CD8-positive, alpha-beta T cell (primary cell): ENCODE measurements at regions of chr3 and their contacts with region 1.

Region 1: GRCh38 chr3:186617038-186617946 is 4.4 kb downstream of the AHSG start:
- DNase-seq: peak; percentile 59 to 95 (median 87)
- ATAC-seq: peak; percentile 99
- H3K4me3 ChIP-seq: peak overlapping the region in 1 of 2 experiments; percentile 15
- H3K4me3 Mint-ChIP-seq: peak overlapping the region; percentile 67
- H3K27ac ChIP-seq: no peak overlapping the region
- H3K27ac Mint-ChIP-seq: no peak overlapping the region
- H3K4me1 ChIP-seq: peaks cover 17% of the 10 kb centered on the region
- H3K4me1 Mint-ChIP-seq: peaks cover 22% of the 10 kb centered on the region
- H3K27me3 ChIP-seq: peaks cover 0 to 10% of the 10 kb centered on the region in 2 experiments
- H3K27me3 Mint-ChIP-seq: peaks cover 34% of the 10 kb centered on the region
- CTCF ChIP-seq: peak; percentile 79

Region 2: DNA sequence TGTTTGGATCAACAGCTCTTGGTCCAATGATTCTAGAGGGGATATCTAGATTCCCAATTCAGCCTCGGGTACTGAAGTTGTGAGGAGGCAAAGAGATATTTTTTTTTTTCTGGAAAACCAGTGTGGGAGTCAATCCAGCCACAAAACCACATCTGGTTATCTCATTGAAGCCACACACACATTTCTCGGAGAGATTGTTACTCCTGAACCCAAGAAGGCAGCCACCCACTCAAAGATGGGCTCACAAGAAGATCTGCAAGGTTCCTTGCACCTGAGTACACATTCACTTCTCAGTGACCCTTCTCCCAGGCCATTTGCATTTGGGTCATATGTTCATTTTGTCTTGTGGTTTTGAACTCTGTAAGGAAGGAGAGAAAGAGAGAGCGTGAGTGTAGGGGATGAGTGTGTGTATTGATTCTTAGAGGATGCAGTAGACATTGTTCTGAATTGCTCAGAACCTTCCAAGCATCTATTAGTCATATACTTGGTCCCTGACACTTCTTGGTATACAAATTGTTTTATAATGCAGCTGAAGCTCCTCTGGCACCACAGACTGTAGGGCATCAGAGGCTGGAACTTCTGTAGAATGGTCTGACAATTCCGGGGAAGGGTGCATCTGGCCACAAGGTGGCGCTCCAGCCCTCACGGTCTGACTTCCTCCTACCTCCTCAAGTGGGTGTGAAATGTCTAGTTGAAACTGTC is 640.2 kb before region 1 on chr3:
- CTCF ChIA-PET with region 1: interaction called, 81 read pairs
- POLR2A ChIA-PET with region 1: no interaction called
- intact Hi-C with region 1: no loop called
- DNase-seq: peak; percentile 50 to 87 (median 79)
- ATAC-seq: peak; percentile 83
- H3K4me3 ChIP-seq: no peak overlapping the region
- H3K4me3 Mint-ChIP-seq: no peak overlapping the region
- H3K27ac ChIP-seq: no peak overlapping the region
- H3K27ac Mint-ChIP-seq: no peak overlapping the region
- H3K4me1 ChIP-seq: peaks cover 3% of the 10 kb centered on the region
- H3K4me1 Mint-ChIP-seq: peaks cover 7% of the 10 kb centered on the region
- H3K27me3 ChIP-seq: no peaks in the 10 kb centered on the region
- H3K27me3 Mint-ChIP-seq: no peaks in the 10 kb centered on the region
- CTCF ChIP-seq: peak; percentile 84

Region 3: DNA sequence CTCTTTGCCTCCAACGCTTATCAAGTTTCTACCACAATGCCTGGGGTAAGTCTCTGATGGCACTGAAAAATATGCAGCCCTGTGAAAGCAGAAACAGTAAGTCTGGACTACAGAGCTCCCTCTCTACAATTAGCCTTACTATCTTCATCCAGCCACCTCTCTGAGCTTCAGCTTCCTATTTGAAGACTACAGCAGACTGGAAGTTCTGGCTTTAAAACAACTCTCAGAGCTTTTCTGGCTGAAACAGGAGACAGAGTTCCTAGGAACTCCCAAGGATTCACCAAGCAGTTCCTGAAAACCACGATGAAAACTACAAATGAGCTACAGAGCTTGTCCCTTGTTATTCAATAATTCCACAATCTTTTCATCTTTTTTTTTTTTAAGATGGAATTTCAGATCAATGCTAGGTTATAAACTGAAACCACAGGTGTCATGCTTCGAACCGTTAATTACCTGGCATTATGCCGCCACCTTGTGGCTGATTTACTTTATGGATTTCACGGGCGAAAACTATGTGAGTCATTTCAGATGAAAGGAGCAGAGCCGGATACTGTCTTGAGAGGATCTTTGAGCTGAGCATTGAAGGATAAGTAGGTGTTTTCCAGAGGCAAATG is 77.0 kb before region 1 on chr3:
- CTCF ChIA-PET with region 1: interaction called, 21 read pairs
- POLR2A ChIA-PET with region 1: no interaction called
- intact Hi-C with region 1: loop called in 1 of 2 experiments (anchors 2 kb)
- DNase-seq: peak; percentile 63 to 90 (median 83)
- ATAC-seq: peak; percentile 96
- H3K4me3 ChIP-seq: no peak overlapping the region
- H3K4me3 Mint-ChIP-seq: no peak overlapping the region
- H3K27ac ChIP-seq: no peak overlapping the region
- H3K27ac Mint-ChIP-seq: peak overlapping the region; percentile 7
- H3K4me1 ChIP-seq: peaks cover 6% of the 10 kb centered on the region
- H3K4me1 Mint-ChIP-seq: peaks cover 11% of the 10 kb centered on the region
- H3K27me3 ChIP-seq: no peaks in the 10 kb centered on the region
- H3K27me3 Mint-ChIP-seq: no peaks in the 10 kb centered on the region
- CTCF ChIP-seq: peak; percentile 80

Region 4: GRCh38 chr3:186596568-186597287 is 20.6 kb before region 1 on chr3:
- CTCF ChIA-PET with region 1: interaction called, 110 read pairs
- POLR2A ChIA-PET with region 1: no interaction called
- intact Hi-C with region 1: no loop called
- DNase-seq: no peak
- ATAC-seq: no peak
- H3K4me3 ChIP-seq: no peak overlapping the region
- H3K4me3 Mint-ChIP-seq: no peak overlapping the region
- H3K27ac ChIP-seq: no peak overlapping the region
- H3K27ac Mint-ChIP-seq: no peak overlapping the region
- H3K4me1 ChIP-seq: no peaks in the 10 kb centered on the region
- H3K4me1 Mint-ChIP-seq: no peaks in the 10 kb centered on the region
- H3K27me3 ChIP-seq: no peaks in the 10 kb centered on the region
- H3K27me3 Mint-ChIP-seq: peaks cover 4% of the 10 kb centered on the region
- CTCF ChIP-seq: no peak

Region 5: DNA sequence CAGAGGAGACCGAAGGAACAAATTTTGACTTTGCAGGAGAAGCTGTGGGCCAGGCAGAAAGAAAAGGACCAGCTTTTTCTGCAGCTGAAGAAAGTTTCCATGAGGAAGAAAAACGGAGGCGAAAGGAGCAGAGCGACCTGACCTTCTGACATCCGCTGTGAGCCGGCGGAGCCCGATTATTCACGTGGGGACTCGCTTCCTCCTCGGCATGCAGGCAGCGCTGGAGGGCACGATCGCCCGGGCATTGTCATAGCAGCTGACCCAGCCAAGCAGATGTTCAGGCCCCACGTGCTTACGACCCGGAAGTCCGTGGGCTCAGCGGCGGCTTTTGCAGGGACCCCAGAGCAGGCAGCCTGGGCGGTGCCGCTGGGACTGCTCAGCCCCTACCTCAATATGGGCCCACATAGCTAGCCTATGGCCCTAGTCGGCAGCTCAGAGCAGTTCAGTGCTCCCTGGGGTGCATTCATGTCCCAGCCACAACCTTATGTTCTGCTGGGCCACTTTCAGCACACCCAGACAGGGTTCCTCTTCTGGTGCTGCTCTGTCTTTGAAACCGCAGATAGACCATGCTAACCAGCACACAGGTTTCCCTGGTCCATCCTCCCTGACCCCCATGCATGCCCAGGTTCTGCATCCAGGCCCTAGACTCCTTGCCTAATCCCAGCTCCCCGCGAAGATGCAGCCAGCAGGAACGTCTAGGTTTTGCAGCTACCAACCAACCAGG is 155.6 kb after region 1 on chr3:
- CTCF ChIA-PET with region 1: interaction called, 5 read pairs
- POLR2A ChIA-PET with region 1: interaction called, 3 read pairs
- intact Hi-C with region 1: loop called in 1 of 2 experiments (anchors 5 kb)
- DNase-seq: peak; percentile 8 to 81 (median 61)
- ATAC-seq: peak; percentile 86
- H3K4me3 ChIP-seq: peak overlapping the region; percentile 70 to 77
- H3K4me3 Mint-ChIP-seq: peak overlapping the region; percentile 97
- H3K27ac ChIP-seq: peak overlapping the region; percentile 55 to 86
- H3K27ac Mint-ChIP-seq: peak overlapping the region; percentile 95
- H3K4me1 ChIP-seq: peaks cover 12% of the 10 kb centered on the region
- H3K4me1 Mint-ChIP-seq: peaks cover 17% of the 10 kb centered on the region
- H3K27me3 ChIP-seq: no peaks in the 10 kb centered on the region
- H3K27me3 Mint-ChIP-seq: no peaks in the 10 kb centered on the region
- CTCF ChIP-seq: no peak

Region 6: GRCh38 chr3:186806089-186807055 is 189.1 kb after region 1 on chr3 and contains the start of gene RFC4:
- CTCF ChIA-PET with region 1: interaction called, 14 read pairs
- POLR2A ChIA-PET with region 1: no interaction called
- intact Hi-C with region 1: loop called in 1 of 2 experiments (anchors 5 kb)
- DNase-seq: peak; percentile 60 to 91 (median 85)
- ATAC-seq: peak; percentile 86
- H3K4me3 ChIP-seq: peak within 1 kb of the TSS; percentile 81 to 97
- H3K4me3 Mint-ChIP-seq: peak within 1 kb of the TSS; percentile 97
- H3K27ac ChIP-seq: peak within 1 kb of the TSS; percentile 89 to 92
- H3K27ac Mint-ChIP-seq: peak within 1 kb of the TSS; percentile 97
- H3K4me1 ChIP-seq: peaks cover 23% of the 10 kb centered on the region
- H3K4me1 Mint-ChIP-seq: peaks cover 22% of the 10 kb centered on the region
- H3K27me3 ChIP-seq: no peaks in the 10 kb centered on the region
- H3K27me3 Mint-ChIP-seq: no peaks in the 10 kb centered on the region
- CTCF ChIP-seq: no peak
- total RNA-seq, gene RFC4: 12.7 to 13.9 TPM

Region 7: DNA sequence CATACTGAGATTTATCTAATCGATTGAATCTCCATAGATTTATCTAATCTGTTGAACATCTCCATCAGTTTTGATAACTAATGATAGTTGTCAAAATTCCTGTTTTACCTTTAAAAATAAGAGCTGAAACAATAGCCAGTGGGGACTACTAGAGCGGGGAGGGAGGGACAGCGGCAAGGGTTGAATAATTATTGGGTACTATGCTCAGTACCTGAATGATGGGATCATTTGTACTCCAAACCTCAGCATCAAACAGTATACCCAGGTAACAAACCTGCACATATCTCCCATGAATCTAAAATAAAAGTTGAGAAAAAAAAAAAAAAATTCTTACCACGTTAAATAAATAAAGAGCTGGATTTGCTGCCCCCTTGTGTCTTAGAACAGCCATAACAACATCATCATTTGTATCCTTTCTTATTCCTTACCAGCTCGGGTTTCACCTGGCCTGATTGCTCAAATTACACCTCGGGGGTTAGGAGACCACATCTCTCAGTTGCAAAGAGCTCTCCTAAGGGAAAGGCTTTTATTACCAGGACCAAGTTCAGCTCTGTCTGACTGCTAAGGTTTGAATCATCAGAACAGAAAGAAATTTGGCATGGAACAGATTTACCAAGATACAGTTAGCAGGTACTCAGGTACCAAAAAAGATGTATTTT is 547.7 kb after region 1 on chr3:
- CTCF ChIA-PET with region 1: interaction called, 3 read pairs
- POLR2A ChIA-PET with region 1: no interaction called
- intact Hi-C with region 1: loop called (anchors 10 kb)
- DNase-seq: peak in 6 of 9 experiments; percentile 8 to 83 (median 38)
- ATAC-seq: peak; percentile 77
- H3K4me3 ChIP-seq: no peak overlapping the region
- H3K4me3 Mint-ChIP-seq: no peak overlapping the region
- H3K27ac ChIP-seq: no peak overlapping the region
- H3K27ac Mint-ChIP-seq: no peak overlapping the region
- H3K4me1 ChIP-seq: no peaks in the 10 kb centered on the region
- H3K4me1 Mint-ChIP-seq: peaks cover 3% of the 10 kb centered on the region
- H3K27me3 ChIP-seq: peaks cover 0 to 3% of the 10 kb centered on the region in 2 experiments
- H3K27me3 Mint-ChIP-seq: no peaks in the 10 kb centered on the region
- CTCF ChIP-seq: peak; percentile 90

Region 8: GRCh38 chr3:187210545-187211327 is 593.4 kb after region 1 on chr3:
- CTCF ChIA-PET with region 1: no interaction called
- POLR2A ChIA-PET with region 1: no interaction called
- intact Hi-C with region 1: no loop called
- DNase-seq: no peak
- ATAC-seq: no peak
- H3K4me3 ChIP-seq: no peak overlapping the region
- H3K4me3 Mint-ChIP-seq: no peak overlapping the region
- H3K27ac ChIP-seq: no peak overlapping the region
- H3K27ac Mint-ChIP-seq: no peak overlapping the region
- H3K4me1 ChIP-seq: no peaks in the 10 kb centered on the region
- H3K4me1 Mint-ChIP-seq: no peaks in the 10 kb centered on the region
- H3K27me3 ChIP-seq: no peaks in the 10 kb centered on the region
- H3K27me3 Mint-ChIP-seq: no peaks in the 10 kb centered on the region
- CTCF ChIP-seq: no peak